Caco-2 (cell line): ENCODE measurements at regions of chr17 and their contacts with region 1.

Region 1: GRCh38 chr17:50691545-50692447 is 15.9 kb downstream of the ANKRD40 start:
- DNase-seq: peak in 1 of 2 experiments; percentile 54
- H3K4me3 ChIP-seq: no peak overlapping the region
- H3K4me3 Mint-ChIP-seq: peak overlapping the region; percentile 63
- H3K27ac Mint-ChIP-seq: peak overlapping the region; percentile 88
- H3K4me1 ChIP-seq: peaks cover 86% of the 10 kb centered on the region
- H3K4me1 Mint-ChIP-seq: peaks cover 70% of the 10 kb centered on the region
- H3K27me3 ChIP-seq: no peaks in the 10 kb centered on the region
- H3K27me3 Mint-ChIP-seq: no peaks in the 10 kb centered on the region
- CTCF ChIP-seq: no peak

Region 2: DNA sequence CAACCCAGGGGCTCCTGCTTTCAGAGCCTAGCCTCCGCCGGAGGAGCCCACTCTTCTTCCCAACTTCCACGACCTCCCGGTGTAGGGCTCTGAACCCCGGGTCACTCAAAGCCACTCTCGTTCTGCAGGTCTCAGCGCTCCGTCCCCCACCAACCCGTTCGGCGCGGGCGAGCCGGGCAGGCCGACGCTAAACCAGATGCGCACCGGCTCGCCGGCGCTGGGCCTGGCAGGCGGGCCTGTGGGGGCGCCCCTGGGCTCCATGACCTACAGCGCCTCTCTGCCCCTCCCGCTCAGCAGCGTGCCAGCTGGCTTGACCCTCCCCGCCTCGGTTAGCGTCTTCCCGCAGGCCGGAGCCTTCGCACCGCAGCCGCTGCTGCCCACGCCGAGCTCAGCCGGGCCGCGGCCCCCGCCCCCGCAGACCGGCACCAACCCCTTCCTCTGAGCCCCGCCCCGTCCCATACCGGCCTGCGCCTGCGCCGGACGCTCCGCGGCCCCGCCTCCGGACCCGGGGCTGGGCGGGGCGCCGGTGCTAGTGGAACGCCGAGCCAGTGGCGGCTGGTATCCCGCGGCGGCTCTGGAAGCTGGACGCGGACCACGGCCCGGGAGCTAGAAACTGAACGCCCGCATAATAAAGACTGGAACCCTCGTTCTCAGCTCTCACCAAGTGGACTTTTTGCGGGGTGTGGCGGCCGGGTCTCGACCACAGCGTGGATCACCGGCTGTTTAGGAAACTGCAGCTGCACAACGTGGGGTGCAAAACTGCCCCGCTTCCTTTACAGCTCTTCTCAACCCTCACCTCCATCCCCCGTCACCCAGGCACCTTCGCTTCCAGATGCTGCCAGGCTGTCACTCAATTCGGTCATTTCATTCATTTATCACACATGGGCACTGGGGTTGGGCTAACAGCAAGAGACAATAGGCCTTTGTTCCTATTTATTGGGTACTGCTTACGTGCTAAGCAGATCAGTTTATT is 149.8 kb before region 1 on chr17:
- CTCF ChIA-PET with region 1: interaction called, 118 read pairs
- POLR2A ChIA-PET with region 1: interaction called, 18 read pairs
- intact Hi-C with region 1: loop called (anchors 1 kb)
- DNase-seq: peak; percentile 94 to 100
- H3K4me3 ChIP-seq: peak overlapping the region; percentile 45
- H3K4me3 Mint-ChIP-seq: peak overlapping the region; percentile 77
- H3K27ac Mint-ChIP-seq: peak overlapping the region; percentile 39
- H3K4me1 ChIP-seq: peaks cover 66% of the 10 kb centered on the region
- H3K4me1 Mint-ChIP-seq: peaks cover 69% of the 10 kb centered on the region
- H3K27me3 ChIP-seq: no peaks in the 10 kb centered on the region
- H3K27me3 Mint-ChIP-seq: no peaks in the 10 kb centered on the region
- CTCF ChIP-seq: peak; percentile 41 to 57

Region 3: GRCh38 chr17:50560185-50560824 is 131.5 kb before region 1 on chr17 and contains the start of gene CACNA1G:
- CTCF ChIA-PET with region 1: interaction called, 43 read pairs
- POLR2A ChIA-PET with region 1: interaction called, 16 read pairs
- intact Hi-C with region 1: loop called (anchors 1 kb)
- DNase-seq: peak; percentile 97 to 100
- H3K4me3 ChIP-seq: peak within 1 kb of the TSS; percentile 41
- H3K4me3 Mint-ChIP-seq: peak within 1 kb of the TSS; percentile 87
- H3K27ac Mint-ChIP-seq: peak within 1 kb of the TSS; percentile 52
- H3K4me1 ChIP-seq: peaks cover 16% of the 10 kb centered on the region
- H3K4me1 Mint-ChIP-seq: peaks cover 7% of the 10 kb centered on the region
- H3K27me3 ChIP-seq: peaks cover 12% of the 10 kb centered on the region
- H3K27me3 Mint-ChIP-seq: peaks cover 16% of the 10 kb centered on the region
- CTCF ChIP-seq: no peak
- total RNA-seq, gene CACNA1G: 1.4 and 1.6 TPM in 2 replicates

Region 4: GRCh38 chr17:50638851-50639767 is 52.7 kb before region 1 on chr17:
- CTCF ChIA-PET with region 1: interaction called, 11 read pairs
- POLR2A ChIA-PET with region 1: interaction called, 10 read pairs
- intact Hi-C with region 1: no loop called
- DNase-seq: peak; percentile 13 to 83
- H3K4me3 ChIP-seq: no peak overlapping the region
- H3K4me3 Mint-ChIP-seq: no peak overlapping the region
- H3K27ac Mint-ChIP-seq: peak overlapping the region; percentile 1
- H3K4me1 ChIP-seq: peaks cover 69% of the 10 kb centered on the region
- H3K4me1 Mint-ChIP-seq: peaks cover 31% of the 10 kb centered on the region
- H3K27me3 ChIP-seq: no peaks in the 10 kb centered on the region
- H3K27me3 Mint-ChIP-seq: no peaks in the 10 kb centered on the region
- CTCF ChIP-seq: no peak

Region 5: GRCh38 chr17:50668025-50668837 is 23.6 kb before region 1 on chr17:
- CTCF ChIA-PET with region 1: interaction called, 9 read pairs
- POLR2A ChIA-PET with region 1: interaction called, 9 read pairs
- intact Hi-C with region 1: loop called (anchors 1 kb)
- DNase-seq: peak in 1 of 2 experiments; percentile 49
- H3K4me3 ChIP-seq: no peak overlapping the region
- H3K4me3 Mint-ChIP-seq: no peak overlapping the region
- H3K27ac Mint-ChIP-seq: peak overlapping the region; percentile 3
- H3K4me1 ChIP-seq: peaks cover 32% of the 10 kb centered on the region
- H3K4me1 Mint-ChIP-seq: peaks cover 44% of the 10 kb centered on the region
- H3K27me3 ChIP-seq: no peaks in the 10 kb centered on the region
- H3K27me3 Mint-ChIP-seq: no peaks in the 10 kb centered on the region
- CTCF ChIP-seq: no peak

Region 6: GRCh38 chr17:50707289-50708049 is 15.7 kb after region 1 on chr17 and contains the start of gene ANKRD40:
- CTCF ChIA-PET with region 1: interaction called, 20 read pairs
- POLR2A ChIA-PET with region 1: interaction called, 4 read pairs
- intact Hi-C with region 1: loop called (anchors 1 kb)
- DNase-seq: peak; percentile 95 to 99
- H3K4me3 ChIP-seq: peak within 1 kb of the TSS; percentile 68
- H3K4me3 Mint-ChIP-seq: peak within 1 kb of the TSS; percentile 97
- H3K27ac Mint-ChIP-seq: peak within 1 kb of the TSS; percentile 79
- H3K4me1 ChIP-seq: peaks cover 15% of the 10 kb centered on the region
- H3K4me1 Mint-ChIP-seq: peaks cover 31% of the 10 kb centered on the region
- H3K27me3 ChIP-seq: no peaks in the 10 kb centered on the region
- H3K27me3 Mint-ChIP-seq: no peaks in the 10 kb centered on the region
- CTCF ChIP-seq: no peak
- total RNA-seq, gene ANKRD40: 113 and 114 TPM in 2 replicates

Region 7: GRCh38 chr17:50719144-50719923 is 27.5 kb after region 1 on chr17 and contains the start of gene LUC7L3:
- CTCF ChIA-PET with region 1: interaction called, 8 read pairs
- POLR2A ChIA-PET with region 1: interaction called, 12 read pairs
- intact Hi-C with region 1: no loop called
- DNase-seq: peak; percentile 99 to 100
- H3K4me3 ChIP-seq: peak within 1 kb of the TSS; percentile 88
- H3K4me3 Mint-ChIP-seq: peak within 1 kb of the TSS; percentile 97
- H3K27ac Mint-ChIP-seq: peak within 1 kb of the TSS; percentile 100
- H3K4me1 ChIP-seq: peaks cover 23% of the 10 kb centered on the region
- H3K4me1 Mint-ChIP-seq: peaks cover 18% of the 10 kb centered on the region
- H3K27me3 ChIP-seq: no peaks in the 10 kb centered on the region
- H3K27me3 Mint-ChIP-seq: no peaks in the 10 kb centered on the region
- CTCF ChIP-seq: no peak
- total RNA-seq, gene LUC7L3: 284 and 287 TPM in 2 replicates